AG04449 (cell line): ENCODE measurements at regions of chr7 and their contacts with region 1.

Region 1: GRCh38 chr7:43260980-43261878 is 148.8 kb downstream of the HECW1 start:
- DNase-seq: peak; percentile 53
- H3K4me3 ChIP-seq: no peak overlapping the region
- CTCF ChIP-seq: peak; percentile 79

Region 2: GRCh38 chr7:42931834-42932651 is 329.2 kb before region 1 on chr7 and contains the starts of genes MRPL32 and PSMA2:
- CTCF ChIA-PET with region 1: interaction called, 31 read pairs
- POLR2A ChIA-PET with region 1: interaction called, 3 read pairs
- DNase-seq: peak; percentile 85
- H3K4me3 ChIP-seq: peak within 1 kb of the TSS; percentile 87
- CTCF ChIP-seq: no peak

Region 3: GRCh38 chr7:42956062-42956461 is 305.2 kb before region 1 on chr7:
- CTCF ChIA-PET with region 1: interaction called, 10 read pairs
- POLR2A ChIA-PET with region 1: no interaction called
- DNase-seq: no peak
- H3K4me3 ChIP-seq: no peak overlapping the region
- CTCF ChIP-seq: no peak

Region 4: DNA sequence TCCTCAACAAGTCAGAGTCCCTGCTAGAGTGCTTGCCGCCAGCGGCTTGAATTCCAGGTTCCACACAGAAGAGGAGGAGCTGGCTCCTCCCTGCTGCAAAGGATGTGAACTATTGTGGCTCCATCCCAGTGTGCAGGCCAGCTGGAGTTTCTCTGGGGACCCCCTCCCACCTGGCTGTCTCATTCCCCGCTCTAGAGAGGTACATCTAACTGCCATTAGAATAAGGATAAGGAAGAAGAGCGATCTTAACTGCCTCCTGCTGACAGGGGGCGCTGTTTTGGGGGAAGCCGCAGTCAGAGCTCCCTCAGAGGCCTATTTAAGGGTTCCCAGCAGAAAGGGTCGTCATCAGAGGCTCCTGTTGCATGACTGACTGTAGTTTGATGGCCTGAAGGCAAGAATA is 189.6 kb before region 1 on chr7:
- CTCF ChIA-PET with region 1: interaction called, 15 read pairs
- POLR2A ChIA-PET with region 1: no interaction called
- DNase-seq: no peak
- H3K4me3 ChIP-seq: no peak overlapping the region
- CTCF ChIP-seq: no peak

Region 5: DNA sequence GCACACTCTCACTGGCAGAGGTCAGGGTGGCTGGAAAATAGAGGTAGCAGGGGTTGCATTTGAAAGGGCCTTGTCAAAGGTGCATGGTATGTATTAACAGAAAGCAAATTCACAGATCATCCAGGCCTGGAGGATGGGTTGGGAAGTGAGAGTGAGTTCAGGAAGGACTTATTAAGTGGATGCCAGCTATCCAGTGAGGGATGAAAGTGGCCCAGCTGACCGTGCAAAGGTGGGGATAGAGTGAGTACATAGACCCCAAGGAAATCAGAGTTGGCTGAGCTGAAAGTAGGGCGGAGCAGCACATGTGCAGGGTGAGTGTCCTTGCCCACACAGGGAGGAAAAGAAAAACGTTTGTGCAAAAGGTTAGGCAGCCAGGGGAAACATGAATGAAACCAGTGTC is 90.7 kb before region 1 on chr7:
- CTCF ChIA-PET with region 1: no interaction called
- POLR2A ChIA-PET with region 1: no interaction called
- DNase-seq: no peak
- H3K4me3 ChIP-seq: no peak overlapping the region
- CTCF ChIP-seq: no peak

Region 6: GRCh38 chr7:43234968-43235367 is 26.3 kb before region 1 on chr7:
- CTCF ChIA-PET with region 1: interaction called, 13 read pairs
- POLR2A ChIA-PET with region 1: no interaction called
- DNase-seq: no peak
- H3K4me3 ChIP-seq: no peak overlapping the region
- CTCF ChIP-seq: no peak

Region 7: GRCh38 chr7:43248961-43249822 is 12.0 kb before region 1 on chr7:
- CTCF ChIA-PET with region 1: interaction called, 74 read pairs
- POLR2A ChIA-PET with region 1: no interaction called
- DNase-seq: peak; percentile 28
- H3K4me3 ChIP-seq: no peak overlapping the region
- CTCF ChIP-seq: no peak

Region 8: GRCh38 chr7:43278088-43278644 is 16.9 kb after region 1 on chr7:
- CTCF ChIA-PET with region 1: interaction called, 13 read pairs
- POLR2A ChIA-PET with region 1: no interaction called
- DNase-seq: no peak
- H3K4me3 ChIP-seq: no peak overlapping the region
- CTCF ChIP-seq: no peak